Caco-2 (cell line): ENCODE measurements at regions of chr20 and their contacts with region 1.

Region 1: DNA sequence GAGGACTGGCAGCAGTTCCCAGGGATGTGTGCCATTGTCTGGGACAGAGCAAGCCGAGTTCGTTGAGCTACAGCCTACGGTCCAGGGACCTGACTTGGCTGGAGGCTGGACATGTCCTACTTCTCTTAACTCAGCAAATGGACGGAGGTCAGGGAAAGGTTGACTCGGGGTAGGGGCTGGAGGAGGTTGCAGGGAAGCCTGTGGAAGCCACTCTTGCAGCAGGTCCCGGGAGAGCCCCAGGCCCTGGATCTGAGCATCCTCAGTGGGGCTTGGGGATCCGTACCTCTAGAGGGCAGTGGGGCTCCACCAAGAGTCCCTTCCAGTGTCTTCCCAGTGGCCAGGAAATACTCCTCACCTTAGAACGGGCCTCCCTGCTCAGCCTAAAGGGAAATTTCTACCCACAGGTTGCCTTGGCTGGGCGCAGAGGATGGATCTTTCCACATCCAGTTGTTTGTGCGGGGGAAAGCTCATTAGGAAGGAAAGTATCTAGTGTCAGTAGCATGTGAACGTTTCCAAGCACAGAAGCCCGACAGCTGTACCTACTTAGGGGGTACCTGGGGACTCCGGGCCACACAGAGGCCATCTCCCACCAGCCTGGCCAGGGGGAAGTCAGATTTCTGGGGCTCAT is 170.2 kb downstream of the NFATC2 start:
- DNase-seq: peak; percentile 88 to 92
- H3K4me3 ChIP-seq: no peak overlapping the region
- H3K4me3 Mint-ChIP-seq: no peak overlapping the region
- H3K27ac Mint-ChIP-seq: no peak overlapping the region
- H3K4me1 ChIP-seq: peaks cover 14% of the 10 kb centered on the region
- H3K4me1 Mint-ChIP-seq: peaks cover 12% of the 10 kb centered on the region
- H3K27me3 ChIP-seq: no peaks in the 10 kb centered on the region
- H3K27me3 Mint-ChIP-seq: peaks cover 6% of the 10 kb centered on the region
- CTCF ChIP-seq: peak; percentile 99

Region 2: DNA sequence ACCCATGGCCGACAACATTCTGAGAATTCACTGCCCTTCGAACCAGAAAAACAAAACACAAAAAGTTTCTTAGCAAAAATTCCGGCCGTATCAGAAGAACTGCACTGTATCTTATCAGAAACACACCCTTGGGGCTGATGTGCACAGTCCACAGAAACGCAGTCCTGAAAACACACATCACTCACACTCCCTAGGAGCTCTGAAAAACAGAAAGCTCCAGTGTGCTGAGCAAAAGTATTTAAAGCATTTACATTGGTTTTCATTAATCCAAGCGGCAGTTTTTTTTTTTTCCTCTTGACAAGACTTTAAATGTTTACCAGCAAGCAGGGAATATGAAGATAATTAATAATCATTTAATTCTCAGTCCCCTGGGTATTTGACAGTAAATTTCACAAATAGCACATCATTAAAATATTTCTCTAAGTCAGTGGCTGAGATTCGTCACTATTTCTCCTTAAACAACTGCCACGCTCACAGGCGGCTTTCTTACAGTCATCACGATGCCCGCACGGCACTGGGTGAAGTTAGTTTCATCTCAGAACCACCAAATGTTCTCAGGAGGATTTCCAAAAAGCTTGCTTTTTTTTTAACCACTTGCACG is 156.9 kb after region 1 on chr20:
- CTCF ChIA-PET with region 1: no interaction called
- POLR2A ChIA-PET with region 1: no interaction called
- intact Hi-C with region 1: loop called (anchors 1 kb)
- DNase-seq: peak; percentile 78 to 86
- H3K4me3 ChIP-seq: 0 out of 2 replicates have a peak overlapping the region, but pooled peaks have one; percentile 6
- H3K4me3 Mint-ChIP-seq: peak overlapping the region; percentile 71
- H3K27ac Mint-ChIP-seq: peak overlapping the region; percentile 59
- H3K4me1 ChIP-seq: peaks cover 73% of the 10 kb centered on the region
- H3K4me1 Mint-ChIP-seq: peaks cover 55% of the 10 kb centered on the region
- H3K27me3 ChIP-seq: no peaks in the 10 kb centered on the region
- H3K27me3 Mint-ChIP-seq: no peaks in the 10 kb centered on the region
- CTCF ChIP-seq: no peak

Region 3: DNA sequence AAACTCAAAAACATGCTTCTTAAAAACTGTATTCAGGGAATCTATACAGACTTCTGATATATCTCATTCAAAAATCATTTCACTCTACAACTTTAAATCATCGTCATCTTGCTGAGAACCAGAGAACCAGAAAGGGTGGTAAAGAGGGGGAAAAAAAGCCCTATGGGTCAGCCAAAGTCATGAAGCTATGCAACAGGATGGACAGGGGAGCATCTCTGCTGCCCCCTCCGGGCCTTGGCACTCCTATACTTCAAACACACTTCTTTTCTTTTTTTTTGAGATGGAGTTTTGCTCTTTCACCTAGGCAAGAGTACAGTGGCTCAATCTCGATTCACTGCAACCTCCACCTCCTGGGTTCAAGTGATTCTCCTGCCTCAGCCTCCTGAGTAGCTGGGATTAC is 243.8 kb after region 1 on chr20:
- CTCF ChIA-PET with region 1: no interaction called
- POLR2A ChIA-PET with region 1: no interaction called
- intact Hi-C with region 1: loop called (anchors 1 kb)
- DNase-seq: no peak
- H3K4me3 ChIP-seq: no peak overlapping the region
- H3K4me3 Mint-ChIP-seq: no peak overlapping the region
- H3K27ac Mint-ChIP-seq: no peak overlapping the region
- H3K4me1 ChIP-seq: no peaks in the 10 kb centered on the region
- H3K4me1 Mint-ChIP-seq: no peaks in the 10 kb centered on the region
- H3K27me3 ChIP-seq: no peaks in the 10 kb centered on the region
- H3K27me3 Mint-ChIP-seq: no peaks in the 10 kb centered on the region
- CTCF ChIP-seq: peak; percentile 36 to 48

Region 4: GRCh38 chr20:51624157-51624731 is 252.0 kb after region 1 on chr20:
- CTCF ChIA-PET with region 1: interaction called, 5 read pairs
- POLR2A ChIA-PET with region 1: no interaction called
- intact Hi-C with region 1: loop called (anchors 1 kb)
- DNase-seq: peak; percentile 83 to 86
- H3K4me3 ChIP-seq: no peak overlapping the region
- H3K4me3 Mint-ChIP-seq: no peak overlapping the region
- H3K27ac Mint-ChIP-seq: no peak overlapping the region
- H3K4me1 ChIP-seq: peaks cover 3% of the 10 kb centered on the region; the same call in 1 of the 2 replicates
- H3K4me1 Mint-ChIP-seq: no peaks in the 10 kb centered on the region
- H3K27me3 ChIP-seq: no peaks in the 10 kb centered on the region
- H3K27me3 Mint-ChIP-seq: no peaks in the 10 kb centered on the region
- CTCF ChIP-seq: peak; percentile 85 to 97